ENCODE measurements at regions of chr3 and their contacts with region 1.

Region 1: GRCh38 chr3:36907911-36908646 is 36.8 kb downstream of the TRANK1 start:
- DNase-seq: no peak
- ATAC-seq: no peak; the same call in 1 of the 2 replicates
- H3K4me3 Mint-ChIP-seq: no peak overlapping the region
- H3K27ac Mint-ChIP-seq: no peak overlapping the region
- H3K4me1 Mint-ChIP-seq: peaks cover 18% of the 10 kb centered on the region
- H3K27me3 Mint-ChIP-seq: no peaks in the 10 kb centered on the region
- CTCF ChIP-seq: no peak

Region 2: GRCh38 chr3:36877930-36878685 is 30.0 kb before region 1 on chr3:
- CTCF ChIA-PET with region 1: no interaction called
- POLR2A ChIA-PET with region 1: no interaction called
- DNase-seq: no peak
- ATAC-seq: no peak
- H3K4me3 Mint-ChIP-seq: no peak overlapping the region
- H3K27ac Mint-ChIP-seq: no peak overlapping the region; the same call in 1 of the 2 replicates
- H3K4me1 Mint-ChIP-seq: peaks cover 2% of the 10 kb centered on the region; the same call in 1 of the 2 replicates
- H3K27me3 Mint-ChIP-seq: no peaks in the 10 kb centered on the region
- CTCF ChIP-seq: no peak

Region 3: GRCh38 chr3:36923523-36923943 is 15.5 kb after region 1 on chr3:
- CTCF ChIA-PET with region 1: interaction called, 17 read pairs
- POLR2A ChIA-PET with region 1: interaction called, 3 read pairs
- DNase-seq: no peak
- ATAC-seq: peak; percentile 86
- H3K4me3 Mint-ChIP-seq: no peak overlapping the region
- H3K27ac Mint-ChIP-seq: no peak overlapping the region; the same call in 1 of the 2 replicates
- H3K4me1 Mint-ChIP-seq: peaks cover 15% of the 10 kb centered on the region
- H3K27me3 Mint-ChIP-seq: no peaks in the 10 kb centered on the region
- CTCF ChIP-seq: no peak

Region 4: GRCh38 chr3:36944012-36944640 is 36.0 kb after region 1 on chr3:
- CTCF ChIA-PET with region 1: interaction called, 23 read pairs
- POLR2A ChIA-PET with region 1: no interaction called
- DNase-seq: peak; percentile 66
- ATAC-seq: peak; percentile 54
- H3K4me3 Mint-ChIP-seq: peak overlapping the region; percentile 75
- H3K27ac Mint-ChIP-seq: no peak overlapping the region
- H3K4me1 Mint-ChIP-seq: peaks cover 25% of the 10 kb centered on the region
- H3K27me3 Mint-ChIP-seq: peaks cover 54% of the 10 kb centered on the region
- CTCF ChIP-seq: no peak

Region 5: GRCh38 chr3:37024092-37024491 is 116.0 kb after region 1 on chr3:
- CTCF ChIA-PET with region 1: no interaction called
- POLR2A ChIA-PET with region 1: no interaction called
- DNase-seq: no peak
- ATAC-seq: no peak
- H3K4me3 Mint-ChIP-seq: no peak overlapping the region
- H3K27ac Mint-ChIP-seq: no peak overlapping the region
- H3K4me1 Mint-ChIP-seq: no peaks in the 10 kb centered on the region
- H3K27me3 Mint-ChIP-seq: no peaks in the 10 kb centered on the region
- CTCF ChIP-seq: no peak